Activated B cell treated with CpG ODN at 0.5 μM for 24 hours (primary cell): ENCODE measurements at regions of chr6 and their contacts with region 1.

Region 1: DNA sequence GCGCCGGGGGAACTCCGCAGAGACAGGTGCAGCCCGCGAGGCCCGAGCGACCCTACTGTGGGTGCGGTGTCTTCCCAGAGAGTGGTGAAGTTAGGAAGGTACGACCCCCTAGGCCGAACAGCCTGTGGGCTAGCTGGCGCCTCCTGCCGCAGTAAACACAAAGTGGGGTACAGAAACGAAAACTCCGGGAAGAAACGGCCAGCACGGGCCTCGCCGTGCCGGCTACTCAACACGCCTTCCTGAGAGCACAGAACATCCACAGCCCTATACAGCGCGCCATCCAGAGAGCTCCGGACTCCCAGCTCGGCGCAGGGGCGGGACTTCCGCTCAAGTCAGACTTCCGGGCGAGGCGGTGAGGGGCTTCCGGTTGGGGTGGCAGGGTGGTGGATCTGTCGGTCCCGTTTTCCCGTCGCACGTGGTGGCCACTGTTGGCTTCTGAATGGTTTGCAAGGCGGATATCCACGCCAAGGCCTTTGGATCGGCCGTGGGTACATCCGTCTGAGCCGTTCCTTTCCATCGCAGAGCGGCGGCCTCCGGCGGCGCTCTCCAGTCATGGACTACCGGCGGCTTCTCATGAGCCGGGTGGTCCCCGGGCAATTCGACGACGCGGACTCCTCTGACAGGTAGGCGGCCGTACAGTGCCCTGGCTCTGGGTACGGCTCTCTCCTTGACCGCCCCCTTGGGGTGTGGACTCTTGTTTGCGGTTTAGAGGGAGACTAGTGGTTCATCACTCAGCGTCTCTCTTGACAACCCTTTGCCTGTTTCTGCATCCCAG is at the starts of genes CAGE1 and RIOK1:
- DNase-seq: peak; percentile 93
- ATAC-seq: peak; percentile 87
- H3K4me3 Mint-ChIP-seq: peak within 1 kb of the TSS; percentile 96
- H3K27ac Mint-ChIP-seq: peak within 1 kb of the TSS; percentile 100
- H3K4me1 Mint-ChIP-seq: peaks cover 34% of the 10 kb centered on the region
- H3K27me3 Mint-ChIP-seq: no peaks in the 10 kb centered on the region
- CTCF ChIP-seq: no peak
- total RNA-seq, gene CAGE1: 0.07 and 0.20 TPM in 2 replicates
- total RNA-seq, gene RIOK1: 38.3 and 38.7 TPM in 2 replicates

Region 2: GRCh38 chr6:6724539-6725467 is 664.8 kb before region 1 on chr6:
- CTCF ChIA-PET with region 1: no interaction called
- POLR2A ChIA-PET with region 1: no interaction called
- intact Hi-C with region 1: loop called (anchors 10 kb)
- DNase-seq: peak; percentile 40
- ATAC-seq: peak; percentile 84
- H3K4me3 Mint-ChIP-seq: peak overlapping the region; percentile 65
- H3K27ac Mint-ChIP-seq: no peak overlapping the region
- H3K4me1 Mint-ChIP-seq: peaks cover 8% of the 10 kb centered on the region
- H3K27me3 Mint-ChIP-seq: peaks cover 23% of the 10 kb centered on the region
- CTCF ChIP-seq: no peak

Region 3: DNA sequence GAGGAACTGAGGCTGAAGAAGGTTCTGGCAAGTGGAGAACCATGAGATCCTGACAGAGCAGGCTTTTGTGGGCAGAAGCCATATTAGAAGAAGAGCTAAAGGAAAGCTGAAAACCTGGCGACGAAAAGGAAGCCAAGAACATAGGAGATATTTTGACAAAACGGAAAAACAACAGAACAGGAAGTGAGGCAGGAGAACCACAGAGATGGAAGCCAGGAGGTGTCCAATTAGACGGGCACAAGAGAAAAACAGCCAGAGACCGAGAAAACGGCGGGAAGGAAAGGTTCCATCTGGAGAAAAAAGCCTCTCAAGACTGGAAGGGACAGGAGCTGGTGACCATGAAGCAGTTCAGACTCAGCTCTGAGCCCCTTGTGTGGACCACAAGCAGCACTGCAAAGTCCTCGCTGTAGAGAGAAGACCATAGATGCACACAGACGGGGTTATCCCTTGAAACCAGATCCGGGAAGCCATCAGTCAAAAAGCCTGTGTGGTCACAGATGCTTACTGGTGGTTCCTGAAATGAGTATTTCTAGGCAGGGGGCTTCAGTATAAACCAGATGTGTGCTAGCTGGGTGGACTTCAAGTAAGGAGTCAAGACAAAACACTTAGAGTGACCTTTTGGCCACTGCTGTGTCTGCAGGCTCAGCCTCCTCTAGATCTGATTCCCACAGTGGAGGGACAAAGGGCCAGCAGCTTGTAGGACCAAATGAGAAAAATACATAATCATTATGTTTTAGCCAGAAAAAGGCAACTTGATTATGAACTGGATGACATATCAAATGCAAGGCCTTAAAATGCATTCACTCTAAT is 107.3 kb before region 1 on chr6:
- CTCF ChIA-PET with region 1: interaction called, 39 read pairs
- POLR2A ChIA-PET with region 1: interaction called, 75 read pairs
- intact Hi-C with region 1: loop called (anchors 1 kb)
- DNase-seq: no peak
- ATAC-seq: no peak
- H3K4me3 Mint-ChIP-seq: no peak overlapping the region
- H3K27ac Mint-ChIP-seq: peak overlapping the region; percentile 41
- H3K4me1 Mint-ChIP-seq: peaks cover 32% of the 10 kb centered on the region
- H3K27me3 Mint-ChIP-seq: no peaks in the 10 kb centered on the region
- CTCF ChIP-seq: no peak

Region 4: DNA sequence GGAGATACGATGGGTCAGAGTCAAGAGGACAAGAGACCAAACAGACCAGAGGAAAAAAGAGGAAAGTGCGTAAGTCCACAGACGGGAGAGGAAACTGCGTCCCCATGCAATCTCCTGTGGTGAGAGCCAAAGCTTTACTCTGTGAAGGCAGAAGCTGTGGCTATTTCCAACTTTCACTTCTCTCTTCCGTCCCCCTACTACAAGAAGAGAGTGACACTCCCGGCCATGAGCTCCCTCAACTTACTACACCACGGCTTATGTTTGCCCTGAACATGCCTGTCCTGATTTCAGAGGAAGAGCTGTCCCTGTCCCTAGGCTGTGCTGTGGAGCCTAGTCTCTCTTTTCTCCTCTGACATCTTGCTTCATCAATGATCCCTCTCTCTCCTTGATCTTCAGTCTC is 65.1 kb before region 1 on chr6:
- CTCF ChIA-PET with region 1: no interaction called
- POLR2A ChIA-PET with region 1: interaction called, 20 read pairs
- intact Hi-C with region 1: no loop called
- DNase-seq: no peak
- ATAC-seq: peak; percentile 88
- H3K4me3 Mint-ChIP-seq: peak overlapping the region; percentile 25
- H3K27ac Mint-ChIP-seq: peak overlapping the region; percentile 76
- H3K4me1 Mint-ChIP-seq: peaks cover 17% of the 10 kb centered on the region
- H3K27me3 Mint-ChIP-seq: no peaks in the 10 kb centered on the region
- CTCF ChIP-seq: no peak

Region 5: DNA sequence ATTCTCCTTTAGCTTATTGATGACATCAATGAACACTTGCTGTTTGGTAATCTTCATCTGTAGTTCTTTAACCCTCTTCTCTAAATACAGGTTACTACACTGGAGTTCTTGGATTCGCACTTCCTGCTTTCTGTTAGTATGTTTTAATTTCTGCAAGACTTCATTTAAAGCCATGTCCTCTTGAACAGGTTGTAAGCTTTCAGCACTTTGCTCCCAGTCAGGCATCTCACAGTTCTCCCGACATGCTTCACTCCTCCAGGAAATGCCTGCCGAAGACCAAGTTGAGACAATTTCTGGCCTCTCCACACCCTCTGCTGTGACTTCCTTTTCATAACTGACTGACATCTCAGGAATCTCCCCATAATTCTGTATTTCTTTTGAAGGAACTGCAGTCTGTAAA is 15.9 kb before region 1 on chr6:
- CTCF ChIA-PET with region 1: no interaction called
- POLR2A ChIA-PET with region 1: no interaction called
- intact Hi-C with region 1: no loop called
- DNase-seq: no peak
- ATAC-seq: no peak
- H3K4me3 Mint-ChIP-seq: no peak overlapping the region
- H3K27ac Mint-ChIP-seq: no peak overlapping the region
- H3K4me1 Mint-ChIP-seq: no peaks in the 10 kb centered on the region
- H3K27me3 Mint-ChIP-seq: peaks cover 7% of the 10 kb centered on the region
- CTCF ChIP-seq: no peak

Region 6: GRCh38 chr6:8102122-8102958 is 712.7 kb after region 1 on chr6 and contains the start of gene EEF1E1:
- CTCF ChIA-PET with region 1: no interaction called
- POLR2A ChIA-PET with region 1: interaction called, 4 read pairs
- intact Hi-C with region 1: loop called (anchors 1 kb)
- DNase-seq: peak; percentile 80
- ATAC-seq: peak; percentile 98
- H3K4me3 Mint-ChIP-seq: peak within 1 kb of the TSS; percentile 97
- H3K27ac Mint-ChIP-seq: peak within 1 kb of the TSS; percentile 93
- H3K4me1 Mint-ChIP-seq: peaks cover 25% of the 10 kb centered on the region
- H3K27me3 Mint-ChIP-seq: peaks cover 14% of the 10 kb centered on the region
- CTCF ChIP-seq: no peak
- total RNA-seq, gene EEF1E1: 32.5 and 33.0 TPM in 2 replicates